CD8-positive, alpha-beta T cell (primary cell): ENCODE measurements at regions of chr2 and their contacts with region 1.

Region 1: DNA sequence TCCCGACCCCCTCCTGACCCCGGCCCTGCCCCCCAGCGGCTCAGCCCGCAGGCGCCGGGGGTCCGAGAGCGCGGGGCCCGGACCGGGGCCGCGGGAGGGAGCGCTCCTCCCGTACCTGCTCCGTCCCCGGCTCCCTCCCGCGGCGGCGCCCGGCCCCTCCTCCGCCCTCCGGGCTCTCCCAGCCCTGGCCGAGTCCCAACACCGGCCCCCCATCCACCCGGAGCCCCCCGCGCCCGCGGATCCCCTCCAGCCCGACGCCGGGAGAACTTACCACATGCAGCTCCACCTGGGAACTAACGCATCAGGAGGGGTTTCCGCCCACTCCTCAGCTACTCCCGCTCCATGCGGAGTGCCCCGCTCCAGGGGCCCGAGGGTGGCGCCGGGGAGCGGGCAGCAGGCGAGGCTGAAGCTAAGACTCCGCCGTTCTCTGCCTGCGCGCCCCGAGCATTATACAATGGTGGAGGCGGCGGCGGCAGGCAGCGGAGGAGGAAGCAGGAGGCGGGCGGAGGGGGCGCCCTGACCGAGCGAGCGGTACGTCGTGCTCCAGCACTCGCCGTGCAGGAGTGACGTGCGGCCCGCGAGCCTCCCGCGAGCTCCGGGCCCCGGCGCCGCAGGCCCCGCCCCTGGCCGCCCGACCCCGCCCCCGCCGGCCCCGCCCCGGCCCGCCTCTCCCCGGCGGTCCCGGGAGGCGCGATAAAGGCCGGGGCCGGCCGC is at the start of gene SERTAD2:
- DNase-seq: peak; percentile 72 to 95 (median 87)
- ATAC-seq: peak; percentile 82
- H3K4me3 ChIP-seq: peak within 1 kb of the TSS; percentile 84 to 85
- H3K4me3 Mint-ChIP-seq: peak within 1 kb of the TSS; percentile 94
- H3K27ac ChIP-seq: peak within 1 kb of the TSS; percentile 86 to 90
- H3K27ac Mint-ChIP-seq: peak within 1 kb of the TSS; percentile 97
- H3K4me1 ChIP-seq: peaks cover 63% of the 10 kb centered on the region
- H3K4me1 Mint-ChIP-seq: peaks cover 78% of the 10 kb centered on the region
- H3K27me3 ChIP-seq: no peaks in the 10 kb centered on the region
- H3K27me3 Mint-ChIP-seq: no peaks in the 10 kb centered on the region
- CTCF ChIP-seq: no peak
- total RNA-seq, gene SERTAD2: 47.5 to 48.8 TPM

Region 2: GRCh38 chr2:63841254-63842022 is 812.1 kb before region 1 on chr2 and contains the start of gene UGP2:
- CTCF ChIA-PET with region 1: no interaction called
- POLR2A ChIA-PET with region 1: no interaction called
- intact Hi-C with region 1: loop called in 1 of 2 experiments (anchors 10 kb)
- DNase-seq: peak; percentile 68 to 92 (median 83)
- ATAC-seq: peak; percentile 68
- H3K4me3 ChIP-seq: peak within 1 kb of the TSS; percentile 94 to 98
- H3K4me3 Mint-ChIP-seq: peak within 1 kb of the TSS; percentile 99
- H3K27ac ChIP-seq: peak within 1 kb of the TSS; percentile 81 to 89
- H3K27ac Mint-ChIP-seq: peak within 1 kb of the TSS; percentile 98
- H3K4me1 ChIP-seq: peaks cover 41% of the 10 kb centered on the region
- H3K4me1 Mint-ChIP-seq: peaks cover 52% of the 10 kb centered on the region
- H3K27me3 ChIP-seq: no peaks in the 10 kb centered on the region
- H3K27me3 Mint-ChIP-seq: no peaks in the 10 kb centered on the region
- CTCF ChIP-seq: peak; percentile 24
- total RNA-seq, gene UGP2: 43.9 to 48.2 TPM

Region 3: GRCh38 chr2:64666810-64667438 is 13.4 kb after region 1 on chr2:
- CTCF ChIA-PET with region 1: interaction called, 93 read pairs
- POLR2A ChIA-PET with region 1: interaction called, 114 read pairs
- intact Hi-C with region 1: loop called in 1 of 2 experiments (anchors 2 kb)
- DNase-seq: peak in 1 of 9 experiments; percentile 38
- ATAC-seq: peak; percentile 70
- H3K4me3 ChIP-seq: no peak overlapping the region
- H3K4me3 Mint-ChIP-seq: peak overlapping the region; percentile 52
- H3K27ac ChIP-seq: peak overlapping the region in 1 of 2 experiments; percentile 73
- H3K27ac Mint-ChIP-seq: peak overlapping the region; percentile 89
- H3K4me1 ChIP-seq: peaks cover 49% of the 10 kb centered on the region
- H3K4me1 Mint-ChIP-seq: peaks cover 33% of the 10 kb centered on the region
- H3K27me3 ChIP-seq: no peaks in the 10 kb centered on the region
- H3K27me3 Mint-ChIP-seq: no peaks in the 10 kb centered on the region
- CTCF ChIP-seq: no peak

Region 4: GRCh38 chr2:64750817-64751285 is 97.3 kb after region 1 on chr2:
- CTCF ChIA-PET with region 1: interaction called, 68 read pairs
- POLR2A ChIA-PET with region 1: interaction called, 142 read pairs
- intact Hi-C with region 1: loop called (anchors 1 kb)
- DNase-seq: peak; percentile 95 to 100 (median 97)
- ATAC-seq: peak; percentile 81
- H3K4me3 ChIP-seq: peak overlapping the region; percentile 86 to 99
- H3K4me3 Mint-ChIP-seq: peak overlapping the region; percentile 99
- H3K27ac ChIP-seq: peak overlapping the region; percentile 88 to 95
- H3K27ac Mint-ChIP-seq: peak overlapping the region; percentile 95
- H3K4me1 ChIP-seq: peaks cover 19% of the 10 kb centered on the region
- H3K4me1 Mint-ChIP-seq: peaks cover 31% of the 10 kb centered on the region
- H3K27me3 ChIP-seq: no peaks in the 10 kb centered on the region
- H3K27me3 Mint-ChIP-seq: no peaks in the 10 kb centered on the region
- CTCF ChIP-seq: no peak

Region 5: GRCh38 chr2:64831134-64831976 is 177.8 kb after region 1 on chr2:
- CTCF ChIA-PET with region 1: interaction called, 222 read pairs
- POLR2A ChIA-PET with region 1: interaction called, 16 read pairs
- intact Hi-C with region 1: no loop called
- DNase-seq: peak; percentile 67 to 91 (median 83)
- ATAC-seq: peak; percentile 88
- H3K4me3 ChIP-seq: peak overlapping the region in 1 of 2 experiments; percentile 32
- H3K4me3 Mint-ChIP-seq: peak overlapping the region; percentile 46
- H3K27ac ChIP-seq: peak overlapping the region in 1 of 2 experiments; percentile 4
- H3K27ac Mint-ChIP-seq: no peak overlapping the region
- H3K4me1 ChIP-seq: peaks cover 10% of the 10 kb centered on the region
- H3K4me1 Mint-ChIP-seq: peaks cover 11% of the 10 kb centered on the region
- H3K27me3 ChIP-seq: peaks cover 0 to 5% of the 10 kb centered on the region in 2 experiments
- H3K27me3 Mint-ChIP-seq: peaks cover 3% of the 10 kb centered on the region
- CTCF ChIP-seq: peak; percentile 94

Region 6: DNA sequence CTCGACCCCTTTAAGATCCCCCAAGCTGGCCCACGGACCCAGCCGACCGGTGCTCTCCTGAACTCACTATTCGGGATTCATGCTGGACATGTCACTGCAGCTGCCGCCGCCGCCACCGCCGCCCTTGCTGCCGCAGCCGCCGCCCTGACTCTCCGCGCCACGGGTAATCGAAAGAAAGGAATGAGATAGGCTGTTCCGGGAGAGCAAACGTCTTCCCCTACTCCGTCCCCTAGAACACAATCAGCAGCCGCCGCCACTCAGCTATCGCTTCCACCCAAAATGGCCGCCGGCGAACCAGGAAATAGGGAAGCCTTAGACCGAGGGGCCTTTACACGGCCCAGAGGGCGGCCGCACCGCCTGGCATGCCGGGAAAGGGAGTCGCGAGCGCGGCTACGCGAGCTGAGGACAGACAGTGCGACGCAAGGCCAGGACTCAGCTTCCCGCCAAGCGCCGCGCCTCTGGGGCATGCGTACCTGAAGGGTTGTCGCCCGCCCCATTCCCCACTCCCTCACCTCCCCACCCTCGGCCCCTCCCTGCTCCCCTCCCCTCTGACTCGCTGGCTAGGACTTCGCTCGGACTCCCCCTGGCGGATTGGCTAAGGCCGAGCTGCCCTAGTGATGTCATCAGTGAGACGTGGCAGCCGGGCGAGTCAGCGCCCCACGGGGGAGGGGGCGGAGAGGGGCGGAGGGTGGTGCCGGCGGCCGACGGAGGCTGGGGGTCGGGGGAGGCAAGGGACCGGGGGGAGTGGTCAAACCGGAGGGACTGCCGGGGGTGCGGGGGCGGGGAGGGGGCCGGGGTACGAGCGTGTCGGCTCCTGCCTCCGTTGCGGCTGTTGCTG is 476.5 kb after region 1 on chr2 and contains the start of gene RAB1A:
- CTCF ChIA-PET with region 1: no interaction called
- POLR2A ChIA-PET with region 1: no interaction called
- intact Hi-C with region 1: loop called in 1 of 2 experiments (anchors 2 kb)
- DNase-seq: peak; percentile 98 to 100 (median 99)
- ATAC-seq: peak; percentile 94
- H3K4me3 ChIP-seq: peak within 1 kb of the TSS; percentile 87 to 88
- H3K4me3 Mint-ChIP-seq: peak within 1 kb of the TSS; percentile 99
- H3K27ac ChIP-seq: peak within 1 kb of the TSS; percentile 91 to 97
- H3K27ac Mint-ChIP-seq: peak within 1 kb of the TSS; percentile 98
- H3K4me1 ChIP-seq: peaks cover 40% of the 10 kb centered on the region
- H3K4me1 Mint-ChIP-seq: peaks cover 44% of the 10 kb centered on the region
- H3K27me3 ChIP-seq: no peaks in the 10 kb centered on the region
- H3K27me3 Mint-ChIP-seq: no peaks in the 10 kb centered on the region
- CTCF ChIP-seq: no peak
- total RNA-seq, gene RAB1A: 101 to 103 TPM